ENCODE measurements at regions of chr16 and their contacts with region 1.

Region 1: GRCh38 chr16:67159593-67160406 is at the starts of genes FBXL8 and TRADD:
- DNase-seq: peak; percentile 81 to 84
- H3K4me3 ChIP-seq: peak within 1 kb of the TSS; percentile 47 to 94 (median 73)
- H3K27ac ChIP-seq: peak within 1 kb of the TSS; percentile 62 to 79 (median 71)
- H3K4me1 ChIP-seq: peaks cover 50 to 55% of the 10 kb centered on the region in 2 donors
- H3K27me3 ChIP-seq: no peaks in the 10 kb centered on the region
- CTCF ChIP-seq: peak in 5 of 6 experiments; percentile 14 to 35 (median 24)
- POLR2A ChIP-seq: peak in 1 of 2 donors; percentile 80
- total RNA-seq, gene FBXL8: 26.3 to 41.9 (median 35.6) TPM
- total RNA-seq, gene TRADD: 27.0 to 42.2 (median 37.0) TPM

Region 2: GRCh38 chr16:66977341-66978113 is 182.3 kb before region 1 on chr16:
- intact Hi-C with region 1: loop called (anchors 2 kb)
- DNase-seq: peak; percentile 86 to 90
- H3K4me3 ChIP-seq: no peak overlapping the region
- H3K27ac ChIP-seq: peak overlapping the region in 1 of 3 donors; percentile 45
- H3K4me1 ChIP-seq: peaks cover 0 to 14% of the 10 kb centered on the region in 2 donors
- H3K27me3 ChIP-seq: no peaks in the 10 kb centered on the region
- CTCF ChIP-seq: peak; percentile 81 to 98 (median 96)
- POLR2A ChIP-seq: no peak

Region 3: DNA sequence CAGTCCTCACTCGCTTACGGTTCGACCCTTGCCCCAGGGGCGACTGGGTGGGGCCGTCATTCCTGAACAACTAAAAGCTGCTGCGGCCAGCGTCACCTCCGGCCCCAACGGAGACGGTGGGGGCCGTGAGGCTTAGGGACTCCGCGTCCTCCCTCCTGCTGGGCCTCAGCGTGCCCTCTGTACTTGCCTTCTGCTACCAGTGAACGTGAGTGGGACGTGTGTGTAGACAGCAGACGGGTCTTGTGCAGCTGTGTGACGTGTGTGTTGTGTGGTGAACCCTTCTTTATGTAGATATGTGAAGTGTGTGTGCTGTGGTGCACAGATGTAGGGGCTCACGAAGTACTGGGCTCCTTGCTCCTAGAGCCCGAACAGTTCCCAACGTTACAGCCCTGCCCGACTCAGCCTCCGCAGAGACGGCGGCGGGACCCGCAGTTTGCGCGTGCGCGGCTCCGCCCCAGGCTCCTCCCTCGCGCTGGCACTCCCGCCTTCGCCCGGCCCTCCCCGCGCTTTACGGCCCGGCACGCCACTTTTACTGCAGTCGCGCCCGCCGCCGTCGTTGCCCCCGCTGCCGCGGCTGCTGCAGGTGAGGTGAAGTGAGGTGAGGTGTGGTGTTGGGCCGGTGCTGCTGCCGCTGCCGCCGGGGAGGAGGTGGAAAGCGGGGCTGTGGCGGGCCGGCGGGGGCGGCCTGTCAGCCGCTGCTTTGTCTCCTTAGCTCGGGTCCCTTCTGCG is 50.2 kb before region 1 on chr16 and contains the start of gene PHAF1:
- intact Hi-C with region 1: loop called (anchors 10 kb)
- DNase-seq: peak; percentile 92 to 95
- H3K4me3 ChIP-seq: peak within 1 kb of the TSS; percentile 79 to 95 (median 90)
- H3K27ac ChIP-seq: peak within 1 kb of the TSS; percentile 56 to 80 (median 72)
- H3K4me1 ChIP-seq: peaks cover 20 to 34% of the 10 kb centered on the region in 2 donors
- H3K27me3 ChIP-seq: no peaks in the 10 kb centered on the region
- CTCF ChIP-seq: no peak
- POLR2A ChIP-seq: peak in 1 of 2 donors; percentile 90
- total RNA-seq, gene PHAF1: 11.4 to 18.9 (median 17.5) TPM

Region 4: GRCh38 chr16:67378642-67379041 is 218.8 kb after region 1 on chr16:
- intact Hi-C with region 1: no loop called
- DNase-seq: no peak
- H3K4me3 ChIP-seq: no peak overlapping the region
- H3K27ac ChIP-seq: no peak overlapping the region
- H3K4me1 ChIP-seq: no peaks in the 10 kb centered on the region
- H3K27me3 ChIP-seq: no peaks in the 10 kb centered on the region
- CTCF ChIP-seq: no peak
- POLR2A ChIP-seq: no peak